IMR-90 (cell line): ENCODE measurements at regions of chr20 and their contacts with region 1.

Region 1: DNA sequence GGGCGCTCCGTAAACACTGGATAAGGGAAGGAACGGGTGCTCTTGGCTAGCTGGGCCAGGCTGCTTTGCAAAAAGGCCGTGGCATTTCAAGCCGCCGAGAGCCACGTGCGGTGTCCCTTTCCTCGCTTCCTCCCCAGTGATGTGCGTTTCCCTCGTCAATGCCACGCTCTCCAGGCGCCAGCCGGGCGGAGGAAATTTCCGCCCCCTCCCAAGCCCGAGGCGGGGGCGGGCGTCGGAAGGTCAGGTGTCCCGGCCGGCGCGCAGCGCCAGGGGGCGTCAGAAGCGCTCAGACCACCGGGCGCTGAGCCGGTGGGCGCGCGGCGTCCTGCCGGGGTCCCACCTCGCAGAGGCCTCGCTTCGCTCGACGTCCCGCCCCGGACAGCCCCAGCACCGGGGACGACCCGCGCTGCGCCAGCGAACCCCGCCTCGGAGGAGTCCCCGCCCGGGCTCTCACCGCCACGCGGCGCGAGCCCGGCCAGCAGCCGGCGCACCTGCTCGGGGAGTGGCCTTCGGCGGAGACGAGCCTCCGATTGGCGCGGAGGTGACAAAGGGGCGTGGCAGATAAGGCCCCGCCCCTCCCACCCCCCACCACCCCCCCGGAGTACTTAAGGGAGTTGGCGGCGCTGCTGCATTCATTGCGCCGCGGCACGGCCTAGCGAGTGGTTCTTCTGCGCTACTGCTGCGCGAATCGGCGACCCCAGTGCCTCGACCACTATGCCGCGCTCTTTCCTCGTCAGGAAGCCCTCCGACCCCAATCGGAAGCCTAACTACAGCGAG is at the start of gene SNAI1:
- DNase-seq: peak; percentile 86
- ATAC-seq: peak; percentile 79
- H3K4me3 ChIP-seq: peak within 1 kb of the TSS; percentile 92
- H3K27ac ChIP-seq: peak within 1 kb of the TSS; percentile 80
- H3K4me1 ChIP-seq: peaks cover 23% of the 10 kb centered on the region
- H3K27me3 ChIP-seq: no peaks in the 10 kb centered on the region
- CTCF ChIP-seq: peak; percentile 52
- POLR2A ChIP-seq: peak; percentile 99
- RAD21 ChIP-seq: peak; percentile 39
- total RNA-seq, gene SNAI1: 0.54 and 0.83 TPM in 2 replicates

Region 2: DNA sequence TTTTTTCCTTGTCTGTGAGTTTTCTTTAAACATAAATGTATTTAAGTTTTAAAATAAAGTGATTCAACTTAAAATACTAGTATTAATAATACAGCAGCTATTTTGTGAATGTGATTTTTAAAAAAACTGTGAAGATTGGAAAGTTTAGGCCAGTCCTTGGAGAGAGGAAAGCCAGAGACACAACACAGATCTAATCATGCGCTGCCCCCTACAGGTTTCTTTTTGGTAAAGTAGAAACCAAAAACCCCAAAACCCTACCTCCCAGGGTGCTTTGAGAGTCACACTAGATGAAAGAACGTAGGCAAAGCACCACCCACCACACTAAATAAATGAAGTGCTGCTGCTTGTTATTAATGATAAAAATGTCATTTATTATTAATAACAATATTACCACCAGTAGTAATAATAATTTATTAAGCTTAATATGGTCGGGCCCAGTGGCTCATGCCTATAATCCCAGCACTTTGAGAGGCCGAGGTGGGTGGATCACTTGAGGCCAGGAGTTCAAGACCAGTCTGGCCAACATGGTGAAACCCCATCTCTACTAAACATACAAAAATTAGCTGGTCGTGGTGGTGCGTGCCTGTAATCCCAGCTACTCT is 136.2 kb before region 1 on chr20:
- CTCF ChIA-PET with region 1: no interaction called
- POLR2A ChIA-PET with region 1: interaction called, 10 read pairs
- dilution Hi-C with region 1: no loop called
- in situ Hi-C with region 1: no loop called
- intact Hi-C with region 1: no loop called
- DNase-seq: peak; percentile 58
- ATAC-seq: peak; percentile 89
- H3K4me3 ChIP-seq: no peak overlapping the region
- H3K27ac ChIP-seq: no peak overlapping the region
- H3K4me1 ChIP-seq: peaks cover 2% of the 10 kb centered on the region; the same call in 1 of the 2 replicates
- H3K27me3 ChIP-seq: no peaks in the 10 kb centered on the region
- CTCF ChIP-seq: peak; percentile 69
- POLR2A ChIP-seq: no peak
- RAD21 ChIP-seq: peak; percentile 75

Region 3: GRCh38 chr20:50029697-50030461 is 47.3 kb after region 1 on chr20:
- CTCF ChIA-PET with region 1: interaction called, 3 read pairs
- POLR2A ChIA-PET with region 1: no interaction called
- dilution Hi-C with region 1: no loop called
- in situ Hi-C with region 1: no loop called
- intact Hi-C with region 1: loop called (anchors 2 kb)
- DNase-seq: peak; percentile 95
- ATAC-seq: peak; percentile 66
- H3K4me3 ChIP-seq: no peak overlapping the region
- H3K27ac ChIP-seq: peak overlapping the region; percentile 51
- H3K4me1 ChIP-seq: peaks cover 29% of the 10 kb centered on the region
- H3K27me3 ChIP-seq: no peaks in the 10 kb centered on the region
- CTCF ChIP-seq: no peak
- POLR2A ChIP-seq: peak; percentile 51; the same call in 1 of the 2 replicates
- RAD21 ChIP-seq: no peak; the same call in 1 of the 2 replicates

Region 4: DNA sequence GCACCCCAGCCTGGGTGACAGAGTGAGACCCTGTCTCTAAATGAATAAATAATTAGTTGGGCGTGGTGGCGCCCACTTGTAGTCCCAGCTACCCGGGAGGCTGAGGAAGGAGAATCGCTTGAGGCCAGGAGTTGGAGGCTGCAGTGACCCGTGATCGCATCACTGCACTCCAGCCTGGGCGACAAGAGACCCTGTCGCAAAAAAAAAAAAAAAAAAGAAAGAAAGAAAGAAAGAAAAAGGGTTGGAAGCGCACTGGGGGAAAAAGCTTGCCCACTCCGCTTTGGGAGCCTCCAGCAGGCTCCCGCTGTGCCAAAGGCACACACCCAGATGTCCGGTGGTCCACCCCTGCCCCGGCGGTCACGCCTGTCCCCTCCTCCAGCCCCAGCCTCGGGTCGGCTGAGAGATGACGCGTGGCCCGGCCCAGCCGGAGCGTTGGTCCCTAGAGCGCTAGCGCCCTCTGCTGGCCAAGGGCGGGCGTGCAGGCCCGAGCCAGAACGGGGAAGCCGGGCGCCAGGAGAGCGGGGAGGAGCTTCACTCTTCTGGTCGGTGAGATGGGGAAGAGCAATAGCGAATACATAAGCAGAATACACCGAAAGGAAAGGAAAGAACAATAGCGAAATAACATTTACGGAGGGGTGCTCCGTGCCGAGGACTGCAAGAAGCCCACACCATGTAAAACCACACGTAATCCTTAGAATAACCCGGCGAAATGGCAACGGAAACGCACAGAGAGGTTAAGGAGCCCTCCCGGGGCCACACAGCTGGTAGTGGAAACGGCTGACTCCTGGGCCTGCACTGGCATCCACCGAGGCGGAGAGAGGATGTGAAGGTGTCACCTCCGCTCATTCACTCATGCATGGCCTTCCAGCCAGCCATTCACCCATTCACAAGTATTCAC is 88.7 kb after region 1 on chr20:
- CTCF ChIA-PET with region 1: interaction called, 98 read pairs
- POLR2A ChIA-PET with region 1: interaction called, 3 read pairs
- dilution Hi-C with region 1: no loop called
- in situ Hi-C with region 1: loop called (anchors 5 kb)
- intact Hi-C with region 1: loop called (anchors 1 kb)
- DNase-seq: peak; percentile 63
- ATAC-seq: peak; percentile 97
- H3K4me3 ChIP-seq: peak overlapping the region; percentile 45
- H3K27ac ChIP-seq: peak overlapping the region; percentile 36; the same call in 1 of the 2 replicates
- H3K4me1 ChIP-seq: peaks cover 7% of the 10 kb centered on the region
- H3K27me3 ChIP-seq: no peaks in the 10 kb centered on the region
- CTCF ChIP-seq: peak; percentile 99
- POLR2A ChIP-seq: peak; percentile 68
- RAD21 ChIP-seq: peak; percentile 100

Region 5: DNA sequence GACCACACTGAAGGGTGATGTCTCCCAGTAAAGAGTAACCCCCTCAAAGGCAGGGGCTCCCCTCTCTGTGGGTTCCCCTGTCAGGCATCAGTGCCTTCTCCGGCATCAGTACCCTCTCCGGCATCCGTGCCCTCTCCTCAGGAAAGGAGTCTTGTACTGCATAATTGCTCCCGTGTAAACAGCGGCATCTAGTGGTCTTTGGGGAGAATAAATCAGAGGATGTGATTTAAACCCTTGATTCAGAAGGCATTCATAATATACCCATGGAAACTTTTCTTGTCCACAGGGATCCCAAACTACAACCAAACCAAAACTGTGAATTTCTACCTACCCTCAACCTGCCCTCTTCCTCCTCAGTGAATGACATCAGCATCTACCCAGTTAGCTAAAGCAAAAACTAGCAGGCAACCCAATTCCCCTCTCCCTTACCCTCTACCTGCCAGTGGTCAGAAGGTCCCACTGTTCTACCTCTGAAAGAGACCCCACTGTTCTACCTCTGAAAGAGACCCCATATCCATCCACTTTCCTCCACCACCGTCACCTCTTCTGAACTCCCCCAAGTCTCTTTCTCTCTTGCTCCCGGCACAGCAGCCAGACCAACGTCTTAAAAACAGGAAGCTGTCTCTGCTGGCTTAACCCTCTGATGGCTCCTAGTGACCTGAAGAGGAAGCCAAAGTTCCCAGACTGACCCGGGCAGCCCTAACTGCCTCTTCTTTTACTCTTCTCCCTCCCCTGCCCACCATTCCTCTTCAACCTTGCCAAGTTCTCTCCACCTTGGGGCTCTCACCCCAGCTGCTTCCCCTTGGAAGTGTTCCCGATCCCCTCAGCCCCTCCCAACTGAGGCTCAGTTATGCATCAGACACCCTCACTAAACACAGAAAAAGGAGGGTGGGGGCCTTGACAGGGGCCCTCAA is 103.2 kb after region 1 on chr20:
- CTCF ChIA-PET with region 1: interaction called, 12 read pairs
- POLR2A ChIA-PET with region 1: no interaction called
- dilution Hi-C with region 1: no loop called
- in situ Hi-C with region 1: no loop called
- intact Hi-C with region 1: loop called (anchors 1 kb)
- DNase-seq: peak; percentile 73
- ATAC-seq: peak; percentile 89
- H3K4me3 ChIP-seq: no peak overlapping the region
- H3K27ac ChIP-seq: peak overlapping the region; percentile 8; the same call in 1 of the 2 replicates
- H3K4me1 ChIP-seq: peaks cover 17% of the 10 kb centered on the region
- H3K27me3 ChIP-seq: no peaks in the 10 kb centered on the region
- CTCF ChIP-seq: peak; percentile 84
- POLR2A ChIP-seq: no peak
- RAD21 ChIP-seq: peak; percentile 78

Region 6: GRCh38 chr20:50179507-50180016 is 197.0 kb after region 1 on chr20:
- CTCF ChIA-PET with region 1: interaction called, 3 read pairs
- POLR2A ChIA-PET with region 1: no interaction called
- dilution Hi-C with region 1: no loop called
- in situ Hi-C with region 1: loop called (anchors 5 kb)
- intact Hi-C with region 1: loop called (anchors 1 kb)
- DNase-seq: no peak
- ATAC-seq: peak; percentile 40
- H3K4me3 ChIP-seq: no peak overlapping the region
- H3K27ac ChIP-seq: no peak overlapping the region
- H3K4me1 ChIP-seq: no peaks in the 10 kb centered on the region
- H3K27me3 ChIP-seq: no peaks in the 10 kb centered on the region
- CTCF ChIP-seq: no peak
- POLR2A ChIP-seq: no peak
- RAD21 ChIP-seq: no peak